ENCODE measurements at regions of chr6 and their contacts with region 1.

Region 1: GRCh38 chr6:114342826-114343780 is at the start of gene HS3ST5:
- DNase-seq: no peak
- H3K4me3 Mint-ChIP-seq: no peak within 1 kb of the TSS
- H3K27ac Mint-ChIP-seq: no peak within 1 kb of the TSS
- H3K4me1 Mint-ChIP-seq: peaks cover 5% of the 10 kb centered on the region
- H3K27me3 Mint-ChIP-seq: peaks cover 38% of the 10 kb centered on the region
- total RNA-seq, gene HS3ST5: not detected in 2 replicates

Region 2: GRCh38 chr6:114042267-114043016 is 300.7 kb before region 1 on chr6:
- intact Hi-C with region 1: no loop called
- DNase-seq: no peak
- H3K4me3 Mint-ChIP-seq: no peak overlapping the region
- H3K27ac Mint-ChIP-seq: peak overlapping the region; percentile 4
- H3K4me1 Mint-ChIP-seq: peaks cover 5% of the 10 kb centered on the region
- H3K27me3 Mint-ChIP-seq: no peaks in the 10 kb centered on the region

Region 3: DNA sequence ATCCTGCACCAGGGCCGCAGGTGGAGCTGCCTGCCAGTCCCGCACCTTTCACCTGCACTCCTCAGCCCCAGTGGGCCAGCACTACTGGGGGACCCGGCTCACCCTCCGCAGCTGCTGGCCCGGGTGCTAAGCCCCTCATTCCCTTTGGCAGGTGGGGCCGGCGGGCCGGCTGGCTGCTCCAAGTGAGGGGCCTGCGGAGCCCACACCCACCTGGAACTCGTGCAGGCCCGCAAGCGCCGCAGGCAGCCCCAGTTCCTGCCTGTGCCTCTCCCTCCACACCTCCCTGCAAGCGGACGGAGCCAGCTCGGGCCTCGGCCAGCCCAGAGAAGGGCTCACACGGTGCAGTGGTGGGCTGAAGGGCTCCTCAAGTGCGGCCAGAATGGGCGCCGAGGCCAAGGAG is 198.7 kb after region 1 on chr6:
- intact Hi-C with region 1: loop called (anchors 10 kb)
- DNase-seq: no peak
- H3K4me3 Mint-ChIP-seq: no peak overlapping the region
- H3K27ac Mint-ChIP-seq: no peak overlapping the region
- H3K4me1 Mint-ChIP-seq: no peaks in the 10 kb centered on the region
- H3K27me3 Mint-ChIP-seq: no peaks in the 10 kb centered on the region